MCF 10A (cell line): ENCODE measurements at regions of chr1 and their contacts with region 1.

Region 1: DNA sequence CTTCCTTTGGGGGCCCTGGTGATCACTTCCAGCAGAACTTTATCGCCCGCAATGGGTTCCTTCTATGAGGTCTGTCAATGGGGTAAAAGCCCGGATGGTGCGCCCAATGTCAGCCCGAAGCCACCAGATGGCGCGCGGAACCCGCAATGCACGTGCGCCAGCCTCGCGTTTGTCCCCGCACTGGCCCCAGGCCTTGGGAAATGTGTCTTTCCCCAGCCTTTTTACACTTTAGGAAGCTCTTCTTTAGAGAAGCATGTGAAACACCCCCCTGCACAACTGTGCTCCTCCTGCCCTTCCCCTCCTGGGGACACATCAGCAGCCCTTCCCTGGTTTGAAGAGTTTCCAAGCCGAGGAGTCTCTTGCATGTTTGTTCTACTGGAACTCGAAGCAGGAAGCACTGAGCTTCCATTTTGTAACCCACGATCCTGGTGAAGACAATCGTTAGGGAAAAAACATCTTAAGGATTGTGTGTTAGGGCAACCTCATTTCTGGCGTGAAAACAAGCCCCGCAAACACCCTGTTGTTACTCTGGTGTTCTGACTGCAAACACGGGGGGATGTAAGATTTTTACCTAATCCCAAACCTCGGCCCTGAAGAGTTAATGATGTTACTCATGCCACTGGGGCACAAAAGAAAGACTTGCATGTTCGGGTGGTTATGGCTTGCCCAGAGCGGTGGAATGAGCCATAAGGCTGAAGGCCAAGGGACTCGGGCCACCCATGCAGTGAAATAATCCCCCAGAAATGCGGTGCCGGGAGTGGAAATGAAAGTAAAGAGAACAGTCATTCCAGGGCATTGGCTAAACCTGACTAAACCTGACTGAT is 20.4 kb upstream of the TARBP1 start:
- DNase-seq: peak; percentile 97
- H3K4me3 Mint-ChIP-seq: peak overlapping the region; percentile 28
- H3K27ac Mint-ChIP-seq: peak overlapping the region; percentile 71
- H3K4me1 Mint-ChIP-seq: peaks cover 53% of the 10 kb centered on the region
- H3K27me3 Mint-ChIP-seq: no peaks in the 10 kb centered on the region
- CTCF ChIP-seq: peak; percentile 100

Region 2: DNA sequence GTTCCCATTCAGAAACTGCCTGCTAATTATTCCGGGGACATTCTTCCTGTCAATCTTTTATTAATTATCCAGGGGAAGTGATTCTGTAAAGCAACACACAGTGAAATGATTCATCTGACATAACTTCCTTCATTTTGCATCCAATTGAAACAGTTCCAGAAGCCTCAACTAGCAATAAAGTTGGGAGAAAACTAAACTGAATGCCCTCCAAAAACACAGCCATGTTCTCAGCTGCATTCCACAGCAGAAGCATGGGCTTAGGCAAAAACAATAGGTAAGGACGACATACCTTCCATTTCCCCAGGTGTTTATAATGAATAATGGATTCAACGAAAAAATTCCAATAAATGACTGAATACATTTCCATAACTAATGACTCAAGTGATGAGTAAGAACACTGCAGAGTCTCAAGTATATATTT is 16.5 kb after region 1 on chr1:
- CTCF ChIA-PET with region 1: interaction called, 29 read pairs
- POLR2A ChIA-PET with region 1: interaction called, 74 read pairs
- intact Hi-C with region 1: no loop called
- DNase-seq: peak; percentile 76
- H3K4me3 Mint-ChIP-seq: no peak overlapping the region
- H3K27ac Mint-ChIP-seq: peak overlapping the region; percentile 80
- H3K4me1 Mint-ChIP-seq: peaks cover 27% of the 10 kb centered on the region
- H3K27me3 Mint-ChIP-seq: no peaks in the 10 kb centered on the region
- CTCF ChIP-seq: no peak

Region 3: GRCh38 chr1:234573711-234574299 is 74.5 kb after region 1 on chr1:
- CTCF ChIA-PET with region 1: interaction called, 13 read pairs
- POLR2A ChIA-PET with region 1: no interaction called
- intact Hi-C with region 1: no loop called
- DNase-seq: peak; percentile 77
- H3K4me3 Mint-ChIP-seq: no peak overlapping the region
- H3K27ac Mint-ChIP-seq: no peak overlapping the region
- H3K4me1 Mint-ChIP-seq: peaks cover 17% of the 10 kb centered on the region
- H3K27me3 Mint-ChIP-seq: no peaks in the 10 kb centered on the region
- CTCF ChIP-seq: no peak

Region 4: GRCh38 chr1:234656856-234657654 is 157.7 kb after region 1 on chr1:
- CTCF ChIA-PET with region 1: interaction called, 20 read pairs
- POLR2A ChIA-PET with region 1: interaction called, 48 read pairs
- intact Hi-C with region 1: loop called (anchors 2 kb)
- DNase-seq: peak; percentile 100
- H3K4me3 Mint-ChIP-seq: peak overlapping the region; percentile 67
- H3K27ac Mint-ChIP-seq: peak overlapping the region; percentile 91
- H3K4me1 Mint-ChIP-seq: peaks cover 57% of the 10 kb centered on the region
- H3K27me3 Mint-ChIP-seq: no peaks in the 10 kb centered on the region
- CTCF ChIP-seq: no peak

Region 5: DNA sequence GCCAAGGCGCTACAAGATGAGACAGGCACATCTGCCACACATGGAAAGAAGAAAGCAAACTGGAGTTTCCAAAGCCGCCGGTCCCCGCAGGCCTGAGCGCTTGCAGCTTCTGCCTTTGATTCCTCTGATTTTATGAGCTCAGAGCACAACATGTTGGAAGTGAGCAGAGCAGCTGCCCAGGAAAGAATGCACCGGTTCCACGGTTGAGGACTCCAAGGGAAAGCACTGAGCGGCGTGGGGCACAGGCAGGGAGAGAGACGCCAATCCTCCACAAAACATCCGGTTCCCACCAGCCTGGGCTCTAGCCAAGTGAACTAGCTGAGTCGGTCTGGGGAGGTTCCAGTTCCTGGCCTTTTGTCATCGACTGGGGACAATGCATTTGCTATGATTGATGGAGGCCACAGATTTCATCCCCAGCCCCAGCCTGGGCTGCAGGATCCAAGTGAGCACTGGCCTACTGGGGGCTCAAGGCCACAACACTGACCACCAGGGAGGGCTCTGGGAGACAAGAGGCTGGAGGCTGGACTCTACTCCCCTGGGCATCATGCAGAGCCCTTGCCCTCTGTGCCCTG is 363.7 kb after region 1 on chr1:
- CTCF ChIA-PET with region 1: interaction called, 3 read pairs
- POLR2A ChIA-PET with region 1: no interaction called
- intact Hi-C with region 1: loop called (anchors 10 kb)
- DNase-seq: peak; percentile 40
- H3K4me3 Mint-ChIP-seq: no peak overlapping the region
- H3K27ac Mint-ChIP-seq: no peak overlapping the region
- H3K4me1 Mint-ChIP-seq: peaks cover 42% of the 10 kb centered on the region
- H3K27me3 Mint-ChIP-seq: no peaks in the 10 kb centered on the region
- CTCF ChIP-seq: no peak

Region 6: DNA sequence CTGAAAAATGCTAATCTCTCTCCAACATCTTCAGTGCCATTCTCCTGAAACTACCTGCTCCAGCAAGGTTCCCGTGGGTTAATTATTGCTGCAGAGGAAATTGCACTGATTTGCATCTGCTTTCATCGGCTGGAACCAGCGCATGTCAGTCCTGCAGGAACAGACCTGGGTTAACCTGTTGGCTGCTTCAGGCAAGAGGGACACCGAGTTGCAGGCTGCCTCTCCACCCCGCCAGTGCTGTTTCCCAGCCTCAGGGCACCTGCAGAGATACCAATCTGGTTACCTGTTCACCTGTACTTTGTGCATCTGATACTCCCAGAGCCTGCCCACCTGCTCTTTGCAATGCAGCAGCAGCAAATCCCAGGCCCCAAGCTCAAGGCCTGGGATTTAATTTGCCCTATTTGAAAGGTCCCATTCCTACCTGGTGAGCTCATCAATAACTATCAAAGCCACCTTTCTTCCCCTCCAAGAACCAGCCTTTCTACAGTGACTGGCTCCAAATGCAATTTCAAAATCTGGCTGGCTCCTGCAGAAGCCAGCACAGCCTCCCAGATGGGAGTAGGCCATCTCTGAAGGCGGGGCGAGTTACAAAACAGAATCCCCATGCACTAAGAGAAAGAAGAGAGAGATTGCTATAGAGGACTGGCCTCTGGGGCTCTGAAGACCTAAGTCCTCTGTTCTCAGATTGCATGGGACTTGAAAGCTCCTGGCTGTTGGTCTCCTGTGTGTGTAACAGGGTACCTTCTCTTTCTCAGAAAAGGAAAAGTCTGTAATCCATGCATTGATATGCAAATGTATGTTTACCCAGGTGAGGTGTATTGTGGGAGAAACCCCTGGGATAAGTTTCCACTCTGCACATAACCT is 561.5 kb after region 1 on chr1:
- CTCF ChIA-PET with region 1: interaction called, 8 read pairs
- POLR2A ChIA-PET with region 1: interaction called, 5 read pairs
- intact Hi-C with region 1: loop called (anchors 1 kb)
- DNase-seq: peak; percentile 76
- H3K4me3 Mint-ChIP-seq: no peak overlapping the region
- H3K27ac Mint-ChIP-seq: no peak overlapping the region
- H3K4me1 Mint-ChIP-seq: peaks cover 38% of the 10 kb centered on the region
- H3K27me3 Mint-ChIP-seq: no peaks in the 10 kb centered on the region
- CTCF ChIP-seq: no peak

Region 7: DNA sequence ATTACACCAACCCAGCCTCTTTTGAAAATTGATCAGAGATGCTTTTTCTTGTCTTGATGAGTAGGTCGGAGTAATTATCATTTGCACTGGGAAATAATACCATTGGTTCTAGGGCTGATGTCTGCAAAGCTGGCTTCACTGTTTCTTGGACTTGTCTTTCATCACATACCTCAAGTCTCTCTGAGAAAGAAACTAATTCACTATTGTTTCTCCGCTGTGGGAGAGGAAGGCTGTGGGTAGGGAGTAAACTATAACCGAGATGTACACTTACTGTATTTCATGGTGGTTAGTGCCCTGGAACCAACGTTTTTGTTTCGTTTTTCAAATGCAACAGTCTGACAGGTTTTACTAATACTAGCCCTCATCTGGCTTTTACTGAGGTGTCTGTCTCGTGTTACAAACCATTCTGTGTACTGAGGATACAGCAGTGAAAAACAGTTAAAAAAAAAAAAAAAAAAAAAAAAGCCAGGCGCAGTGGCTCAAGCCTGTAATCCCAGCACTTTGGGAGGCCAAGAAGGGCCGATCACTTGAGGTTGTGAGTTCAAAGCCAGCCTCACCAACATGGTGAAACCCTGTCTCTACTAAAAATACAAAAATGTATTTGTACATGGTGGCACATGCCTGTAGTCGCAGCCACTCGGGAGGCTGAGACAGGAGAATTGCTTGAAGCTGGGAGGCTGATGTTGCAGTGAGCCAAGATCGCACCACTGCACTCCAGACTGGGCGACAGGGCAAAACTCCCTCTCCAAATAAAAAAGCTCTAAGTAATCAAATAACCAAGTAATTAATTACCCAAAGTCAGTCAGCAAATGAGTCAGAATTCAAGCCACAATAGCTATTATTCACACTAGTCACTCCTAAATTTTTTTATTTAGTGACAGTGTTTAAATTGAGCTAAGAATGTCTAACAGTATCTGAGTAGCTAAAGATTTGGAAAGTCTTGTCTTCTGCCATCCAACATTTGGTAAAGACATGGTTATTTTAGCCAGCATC is 606.0 kb after region 1 on chr1:
- CTCF ChIA-PET with region 1: interaction called, 13 read pairs
- POLR2A ChIA-PET with region 1: interaction called, 8 read pairs
- intact Hi-C with region 1: no loop called
- DNase-seq: peak; percentile 51
- H3K4me3 Mint-ChIP-seq: peak overlapping the region; percentile 59
- H3K27ac Mint-ChIP-seq: peak overlapping the region; percentile 33
- H3K4me1 Mint-ChIP-seq: peaks cover 29% of the 10 kb centered on the region
- H3K27me3 Mint-ChIP-seq: no peaks in the 10 kb centered on the region
- CTCF ChIP-seq: no peak